ENCODE measurements at regions of chr13 and their contacts with region 1.

Region 1: GRCh38 chr13:77767413-77767812 is 69.9 kb downstream of the SLAIN1 start:
- DNase-seq: no peak
- ATAC-seq: peak in 1 of 2 donors; percentile 66
- H3K4me3 ChIP-seq: no peak overlapping the region
- H3K27ac ChIP-seq: no peak overlapping the region
- H3K4me1 ChIP-seq: no peaks in the 10 kb centered on the region
- H3K27me3 ChIP-seq: no peaks in the 10 kb centered on the region

Region 2: DNA sequence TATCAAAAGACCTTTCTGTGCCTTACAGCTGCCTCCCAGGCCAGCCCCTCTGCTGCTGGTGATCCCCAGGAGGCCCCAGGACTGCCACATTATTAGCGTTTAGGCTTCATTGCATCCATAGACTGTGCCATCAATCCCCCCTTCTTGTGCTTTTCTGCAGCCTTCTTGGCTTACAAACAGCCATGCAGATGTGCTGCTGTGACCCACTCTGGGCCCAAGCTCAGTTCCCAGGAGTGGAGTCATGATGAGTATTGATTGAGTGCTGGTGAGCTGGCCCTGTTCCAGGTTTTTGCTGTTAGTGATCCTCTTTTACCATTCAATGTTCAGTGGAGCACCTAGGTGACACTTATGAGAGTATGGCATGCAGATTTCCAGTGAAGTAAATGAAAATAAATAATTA is 129.8 kb before region 1 on chr13:
- intact Hi-C with region 1: no loop called
- DNase-seq: no peak
- ATAC-seq: no peak
- H3K4me3 ChIP-seq: no peak overlapping the region
- H3K27ac ChIP-seq: no peak overlapping the region
- H3K4me1 ChIP-seq: no peaks in the 10 kb centered on the region
- H3K27me3 ChIP-seq: no peaks in the 10 kb centered on the region

Region 3: GRCh38 chr13:78609464-78610205 is 842.2 kb after region 1 on chr13:
- intact Hi-C with region 1: loop called in 1 of 4 experiments (anchors 5 kb)
- DNase-seq: peak; percentile 16 to 62 (median 51)
- ATAC-seq: peak; percentile 28 to 47
- H3K4me3 ChIP-seq: peak overlapping the region; percentile 77
- H3K27ac ChIP-seq: no peak overlapping the region
- H3K4me1 ChIP-seq: peaks cover 6% of the 10 kb centered on the region
- H3K27me3 ChIP-seq: peaks cover 3% of the 10 kb centered on the region